A673 (cell line): ENCODE measurements at regions of chr1 and their contacts with region 1.

Region 1: DNA sequence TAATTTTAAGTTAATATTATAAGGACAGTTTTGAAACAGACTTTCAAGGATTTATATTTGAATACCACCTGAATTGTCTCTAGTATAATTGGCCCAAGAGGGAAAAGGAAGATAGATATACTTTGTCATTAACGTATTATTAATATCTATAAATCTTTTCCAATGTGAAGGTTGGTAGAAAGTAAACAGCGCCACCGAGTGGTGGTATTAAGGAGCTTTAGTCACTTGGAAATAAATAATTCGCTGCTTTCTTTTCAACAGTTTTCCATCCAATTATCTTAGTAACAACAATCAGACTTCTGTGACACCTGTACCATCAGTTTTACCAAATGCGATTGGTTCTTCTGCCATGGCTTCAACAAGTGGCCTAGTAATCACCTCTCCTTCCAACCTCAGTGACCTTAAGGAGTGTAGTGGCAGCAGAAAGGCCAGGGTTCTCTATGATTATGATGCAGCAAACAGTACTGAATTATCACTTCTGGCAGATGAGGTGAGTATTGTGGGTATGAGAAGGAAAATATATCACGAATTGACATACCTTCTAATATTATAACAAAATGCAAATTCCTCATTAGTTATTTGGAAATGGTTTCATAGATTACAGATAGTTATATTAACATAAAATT is 37.7 kb downstream of the SH3GLB1 start:
- DNase-seq: peak; percentile 51
- H3K4me3 ChIP-seq: no peak overlapping the region
- H3K27ac ChIP-seq: no peak overlapping the region
- H3K4me1 ChIP-seq: no peaks in the 10 kb centered on the region
- H3K27me3 ChIP-seq: no peaks in the 10 kb centered on the region
- CTCF ChIP-seq: peak; percentile 87

Region 2: GRCh38 chr1:86339014-86339812 is 402.8 kb before region 1 on chr1:
- CTCF ChIA-PET with region 1: no interaction called
- POLR2A ChIA-PET with region 1: no interaction called
- intact Hi-C with region 1: no loop called
- DNase-seq: no peak
- H3K4me3 ChIP-seq: no peak overlapping the region
- H3K27ac ChIP-seq: no peak overlapping the region
- H3K4me1 ChIP-seq: no peaks in the 10 kb centered on the region
- H3K27me3 ChIP-seq: no peaks in the 10 kb centered on the region
- CTCF ChIP-seq: no peak

Region 3: DNA sequence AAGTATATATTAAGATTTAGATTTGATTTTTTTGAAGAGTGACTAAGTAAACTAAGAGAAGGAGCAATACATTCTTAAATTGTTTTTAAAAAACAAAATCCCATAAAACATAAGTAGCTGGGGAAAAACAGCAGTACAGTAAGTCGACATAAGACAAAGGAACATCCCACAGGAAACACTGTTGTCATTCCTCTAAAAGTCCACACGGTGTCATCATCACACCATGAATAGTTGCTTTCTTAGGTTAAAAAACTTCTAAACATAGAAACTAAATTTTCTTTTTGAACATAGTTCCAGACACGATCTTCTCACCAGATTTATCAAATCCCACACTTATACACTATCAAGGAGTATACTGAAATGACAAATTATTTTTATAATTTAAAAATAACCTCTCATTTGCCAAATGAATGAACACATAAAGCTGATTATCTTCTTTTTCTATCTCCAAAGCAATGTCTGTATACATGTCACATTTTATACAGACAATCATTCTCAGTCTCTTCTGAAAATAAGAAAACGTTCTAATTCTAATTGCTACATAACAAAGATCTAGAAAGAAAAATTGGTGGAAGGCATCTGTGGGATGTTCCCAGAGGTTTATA is 361.7 kb before region 1 on chr1:
- CTCF ChIA-PET with region 1: no interaction called
- POLR2A ChIA-PET with region 1: no interaction called
- intact Hi-C with region 1: loop called (anchors 5 kb)
- DNase-seq: peak; percentile 73
- H3K4me3 ChIP-seq: no peak overlapping the region
- H3K27ac ChIP-seq: no peak overlapping the region
- H3K4me1 ChIP-seq: no peaks in the 10 kb centered on the region
- H3K27me3 ChIP-seq: no peaks in the 10 kb centered on the region
- CTCF ChIP-seq: peak; percentile 76

Region 4: DNA sequence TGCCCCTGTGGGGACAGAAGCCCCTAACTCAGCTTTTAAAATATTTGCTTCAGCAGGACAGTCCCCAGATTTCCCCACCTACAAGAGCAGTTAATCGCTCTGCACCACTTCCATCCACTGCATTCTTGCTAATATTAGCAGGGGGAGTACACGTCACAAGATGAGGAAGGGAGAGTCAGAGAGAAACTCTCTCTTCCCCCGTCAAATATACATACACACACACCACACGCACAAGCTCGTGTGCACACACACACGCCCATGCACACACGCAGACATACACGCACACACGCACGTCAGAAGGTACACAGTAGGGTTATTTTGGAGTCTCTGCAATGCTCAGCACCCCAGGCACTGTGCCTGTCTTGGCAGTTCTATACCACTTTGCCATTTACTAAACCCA is 271.2 kb before region 1 on chr1:
- CTCF ChIA-PET with region 1: no interaction called
- POLR2A ChIA-PET with region 1: no interaction called
- intact Hi-C with region 1: loop called (anchors 10 kb)
- DNase-seq: no peak
- H3K4me3 ChIP-seq: no peak overlapping the region
- H3K27ac ChIP-seq: no peak overlapping the region
- H3K4me1 ChIP-seq: no peaks in the 10 kb centered on the region
- H3K27me3 ChIP-seq: no peaks in the 10 kb centered on the region
- CTCF ChIP-seq: no peak

Region 5: GRCh38 chr1:86499987-86500593 is 242.0 kb before region 1 on chr1:
- CTCF ChIA-PET with region 1: no interaction called
- POLR2A ChIA-PET with region 1: no interaction called
- intact Hi-C with region 1: loop called (anchors 10 kb)
- DNase-seq: peak; percentile 78
- H3K4me3 ChIP-seq: no peak overlapping the region
- H3K27ac ChIP-seq: no peak overlapping the region
- H3K4me1 ChIP-seq: no peaks in the 10 kb centered on the region
- H3K27me3 ChIP-seq: no peaks in the 10 kb centered on the region
- CTCF ChIP-seq: no peak; the same call in none of the 2 replicates

Region 6: DNA sequence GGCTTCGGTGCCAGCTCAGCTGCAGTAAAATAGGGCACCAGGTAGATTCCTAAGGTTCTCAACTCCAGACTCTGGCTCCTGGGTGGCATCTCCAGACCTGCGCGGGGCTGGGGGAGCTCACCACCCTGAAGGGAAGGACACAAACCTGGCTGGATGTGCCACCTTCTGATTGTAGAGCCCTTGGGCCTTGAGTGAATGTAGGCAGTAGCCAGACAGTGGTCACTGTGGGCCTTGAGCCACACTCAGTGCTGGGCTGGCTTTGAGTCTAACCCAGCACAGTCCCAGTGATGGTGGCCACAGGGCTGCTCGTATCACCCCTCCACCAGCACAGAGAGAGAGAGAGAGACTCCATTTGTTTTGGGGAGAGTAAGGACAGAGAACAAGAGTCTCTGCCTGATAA is 75.7 kb before region 1 on chr1:
- CTCF ChIA-PET with region 1: no interaction called
- POLR2A ChIA-PET with region 1: no interaction called
- intact Hi-C with region 1: no loop called
- DNase-seq: no peak
- H3K4me3 ChIP-seq: no peak overlapping the region
- H3K27ac ChIP-seq: no peak overlapping the region
- H3K4me1 ChIP-seq: no peaks in the 10 kb centered on the region
- H3K27me3 ChIP-seq: no peaks in the 10 kb centered on the region
- CTCF ChIP-seq: no peak

Region 7: GRCh38 chr1:86704458-86704971 is 37.5 kb before region 1 on chr1 and contains the start of gene SH3GLB1:
- CTCF ChIA-PET with region 1: interaction called, 6 read pairs
- POLR2A ChIA-PET with region 1: no interaction called
- intact Hi-C with region 1: loop called (anchors 5 kb)
- DNase-seq: peak; percentile 89
- H3K4me3 ChIP-seq: peak within 1 kb of the TSS; percentile 98
- H3K27ac ChIP-seq: peak within 1 kb of the TSS; percentile 86
- H3K4me1 ChIP-seq: peaks cover 14% of the 10 kb centered on the region
- H3K27me3 ChIP-seq: no peaks in the 10 kb centered on the region
- CTCF ChIP-seq: peak; percentile 95
- total RNA-seq, gene SH3GLB1: 43.4 and 45.9 TPM in 2 replicates